CD8-positive, alpha-beta T cell (primary cell): ENCODE measurements at regions of chr10 and their contacts with region 1.

Region 1: GRCh38 chr10:97553575-97554031 is 19.0 kb upstream of the ANKRD2 start:
- DNase-seq: peak; percentile 30 to 72 (median 56)
- ATAC-seq: peak; percentile 79
- H3K4me3 ChIP-seq: no peak overlapping the region
- H3K4me3 Mint-ChIP-seq: no peak overlapping the region
- H3K27ac ChIP-seq: no peak overlapping the region
- H3K27ac Mint-ChIP-seq: no peak overlapping the region
- H3K4me1 ChIP-seq: no peaks in the 10 kb centered on the region
- H3K4me1 Mint-ChIP-seq: peaks cover 2% of the 10 kb centered on the region
- H3K27me3 ChIP-seq: no peaks in the 10 kb centered on the region
- H3K27me3 Mint-ChIP-seq: no peaks in the 10 kb centered on the region
- CTCF ChIP-seq: peak; percentile 52

Region 2: GRCh38 chr10:97407211-97407951 is 146.2 kb before region 1 on chr10:
- CTCF ChIA-PET with region 1: interaction called, 20 read pairs
- POLR2A ChIA-PET with region 1: interaction called, 3 read pairs
- intact Hi-C with region 1: loop called in 1 of 2 experiments (anchors 1 kb)
- DNase-seq: peak in 8 of 9 experiments; percentile 41 to 87 (median 66)
- ATAC-seq: peak; percentile 99
- H3K4me3 ChIP-seq: peak overlapping the region in 1 of 2 experiments; percentile 27
- H3K4me3 Mint-ChIP-seq: peak overlapping the region; percentile 45
- H3K27ac ChIP-seq: peak overlapping the region in 1 of 2 experiments; percentile 51
- H3K27ac Mint-ChIP-seq: peak overlapping the region; percentile 37
- H3K4me1 ChIP-seq: peaks cover 5% of the 10 kb centered on the region
- H3K4me1 Mint-ChIP-seq: peaks cover 11% of the 10 kb centered on the region
- H3K27me3 ChIP-seq: no peaks in the 10 kb centered on the region
- H3K27me3 Mint-ChIP-seq: no peaks in the 10 kb centered on the region
- CTCF ChIP-seq: peak; percentile 86

Region 3: GRCh38 chr10:97463363-97464132 is 90.1 kb before region 1 on chr10:
- CTCF ChIA-PET with region 1: interaction called, 109 read pairs
- POLR2A ChIA-PET with region 1: no interaction called
- intact Hi-C with region 1: loop called in 1 of 2 experiments (anchors 1 kb)
- DNase-seq: peak in 6 of 9 experiments; percentile 7 to 66 (median 36)
- ATAC-seq: peak; percentile 91
- H3K4me3 ChIP-seq: no peak overlapping the region
- H3K4me3 Mint-ChIP-seq: no peak overlapping the region
- H3K27ac ChIP-seq: no peak overlapping the region
- H3K27ac Mint-ChIP-seq: peak overlapping the region; percentile 45
- H3K4me1 ChIP-seq: no peaks in the 10 kb centered on the region
- H3K4me1 Mint-ChIP-seq: no peaks in the 10 kb centered on the region
- H3K27me3 ChIP-seq: no peaks in the 10 kb centered on the region
- H3K27me3 Mint-ChIP-seq: no peaks in the 10 kb centered on the region
- CTCF ChIP-seq: peak; percentile 83

Region 4: DNA sequence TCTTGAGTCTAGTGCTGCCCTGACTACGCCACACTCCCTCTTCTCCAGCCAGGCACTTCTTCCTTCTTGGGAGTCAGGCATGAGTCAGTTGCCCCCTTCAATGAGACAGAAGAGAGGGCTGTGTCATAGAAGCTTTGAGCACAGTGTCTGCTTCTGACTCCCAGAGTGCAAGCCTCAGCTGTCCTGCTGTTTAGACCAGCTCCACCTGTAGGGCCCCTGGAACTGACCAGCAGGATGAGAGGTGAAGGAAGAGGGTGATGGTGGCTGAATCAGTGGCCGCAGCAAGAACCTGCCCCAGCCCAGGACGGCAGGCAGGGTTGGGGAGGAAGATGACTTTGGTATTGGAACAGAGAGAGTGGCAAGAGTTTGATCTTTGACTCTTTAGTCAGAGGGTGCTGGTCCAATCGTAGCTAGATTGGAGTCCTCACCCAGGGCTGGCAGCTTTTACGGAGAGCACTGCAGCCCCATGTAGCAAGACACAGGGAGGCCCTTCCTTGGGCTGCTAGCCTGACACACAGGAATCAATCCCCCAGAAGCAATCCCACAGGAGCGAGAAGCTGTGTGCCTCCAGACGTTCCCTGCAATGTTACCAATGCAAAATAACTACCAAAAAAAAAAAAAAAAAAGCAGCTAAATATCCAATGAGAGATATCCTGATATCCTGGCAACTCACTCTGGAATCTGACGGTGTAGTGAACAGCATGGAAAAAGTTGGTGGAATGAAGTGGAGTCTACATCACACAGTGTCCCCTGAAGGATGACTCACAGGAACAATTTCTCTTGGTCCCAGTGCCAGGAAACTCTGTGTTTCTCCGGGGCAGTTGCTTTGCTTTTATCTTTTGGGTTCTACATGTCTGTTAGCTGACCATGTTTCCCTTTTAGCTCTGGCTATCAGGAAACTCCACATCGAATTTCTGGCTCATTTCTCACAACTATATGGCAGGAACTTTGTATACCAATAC is 42.8 kb after region 1 on chr10:
- CTCF ChIA-PET with region 1: interaction called, 11 read pairs
- POLR2A ChIA-PET with region 1: no interaction called
- intact Hi-C with region 1: no loop called
- DNase-seq: no peak
- ATAC-seq: no peak
- H3K4me3 ChIP-seq: no peak overlapping the region
- H3K4me3 Mint-ChIP-seq: no peak overlapping the region
- H3K27ac ChIP-seq: no peak overlapping the region
- H3K27ac Mint-ChIP-seq: no peak overlapping the region
- H3K4me1 ChIP-seq: no peaks in the 10 kb centered on the region
- H3K4me1 Mint-ChIP-seq: no peaks in the 10 kb centered on the region
- H3K27me3 ChIP-seq: no peaks in the 10 kb centered on the region
- H3K27me3 Mint-ChIP-seq: no peaks in the 10 kb centered on the region
- CTCF ChIP-seq: no peak

Region 5: GRCh38 chr10:97676770-97677581 is 123.4 kb after region 1 on chr10:
- CTCF ChIA-PET with region 1: no interaction called
- POLR2A ChIA-PET with region 1: no interaction called
- intact Hi-C with region 1: no loop called
- DNase-seq: peak in 8 of 9 experiments; percentile 27 to 79 (median 56)
- ATAC-seq: peak; percentile 97
- H3K4me3 ChIP-seq: no peak overlapping the region
- H3K4me3 Mint-ChIP-seq: no peak overlapping the region
- H3K27ac ChIP-seq: no peak overlapping the region
- H3K27ac Mint-ChIP-seq: no peak overlapping the region
- H3K4me1 ChIP-seq: no peaks in the 10 kb centered on the region
- H3K4me1 Mint-ChIP-seq: no peaks in the 10 kb centered on the region
- H3K27me3 ChIP-seq: no peaks in the 10 kb centered on the region
- H3K27me3 Mint-ChIP-seq: no peaks in the 10 kb centered on the region
- CTCF ChIP-seq: peak; percentile 91

Region 6: GRCh38 chr10:97726636-97727178 is 173.1 kb after region 1 on chr10:
- CTCF ChIA-PET with region 1: no interaction called
- POLR2A ChIA-PET with region 1: no interaction called
- intact Hi-C with region 1: no loop called
- DNase-seq: no peak
- ATAC-seq: no peak
- H3K4me3 ChIP-seq: no peak overlapping the region
- H3K4me3 Mint-ChIP-seq: no peak overlapping the region
- H3K27ac ChIP-seq: no peak overlapping the region
- H3K27ac Mint-ChIP-seq: no peak overlapping the region
- H3K4me1 ChIP-seq: no peaks in the 10 kb centered on the region
- H3K4me1 Mint-ChIP-seq: no peaks in the 10 kb centered on the region
- H3K27me3 ChIP-seq: peaks cover 0 to 2% of the 10 kb centered on the region in 2 experiments
- H3K27me3 Mint-ChIP-seq: peaks cover 19% of the 10 kb centered on the region
- CTCF ChIP-seq: no peak

Region 7: DNA sequence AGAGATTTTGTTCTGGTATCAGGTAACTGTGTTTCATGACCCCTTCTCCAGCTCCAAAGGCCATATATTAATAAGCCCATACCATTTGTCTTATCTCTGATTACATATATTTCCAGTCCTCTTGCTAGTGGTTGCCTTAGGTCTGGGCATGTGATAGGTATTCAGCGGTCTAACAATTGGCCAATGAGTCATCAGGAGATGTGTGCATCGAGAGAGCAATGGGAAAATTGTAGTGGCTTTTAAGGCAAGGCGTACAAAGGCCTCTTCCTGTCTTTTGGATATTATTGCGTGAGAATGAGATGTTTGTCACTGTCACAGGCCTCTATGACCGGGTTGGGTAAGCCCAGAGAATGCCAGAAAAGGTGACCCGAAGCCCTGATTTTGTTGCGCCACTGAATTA is 256.8 kb after region 1 on chr10:
- CTCF ChIA-PET with region 1: no interaction called
- POLR2A ChIA-PET with region 1: no interaction called
- intact Hi-C with region 1: no loop called
- DNase-seq: no peak
- ATAC-seq: no peak
- H3K4me3 ChIP-seq: no peak overlapping the region
- H3K4me3 Mint-ChIP-seq: no peak overlapping the region
- H3K27ac ChIP-seq: no peak overlapping the region
- H3K27ac Mint-ChIP-seq: no peak overlapping the region
- H3K4me1 ChIP-seq: no peaks in the 10 kb centered on the region
- H3K4me1 Mint-ChIP-seq: peaks cover 15% of the 10 kb centered on the region
- H3K27me3 ChIP-seq: no peaks in the 10 kb centered on the region
- H3K27me3 Mint-ChIP-seq: no peaks in the 10 kb centered on the region
- CTCF ChIP-seq: no peak